PC-9 (cell line): ENCODE measurements at regions of chr5 and their contacts with region 1.

Region 1: DNA sequence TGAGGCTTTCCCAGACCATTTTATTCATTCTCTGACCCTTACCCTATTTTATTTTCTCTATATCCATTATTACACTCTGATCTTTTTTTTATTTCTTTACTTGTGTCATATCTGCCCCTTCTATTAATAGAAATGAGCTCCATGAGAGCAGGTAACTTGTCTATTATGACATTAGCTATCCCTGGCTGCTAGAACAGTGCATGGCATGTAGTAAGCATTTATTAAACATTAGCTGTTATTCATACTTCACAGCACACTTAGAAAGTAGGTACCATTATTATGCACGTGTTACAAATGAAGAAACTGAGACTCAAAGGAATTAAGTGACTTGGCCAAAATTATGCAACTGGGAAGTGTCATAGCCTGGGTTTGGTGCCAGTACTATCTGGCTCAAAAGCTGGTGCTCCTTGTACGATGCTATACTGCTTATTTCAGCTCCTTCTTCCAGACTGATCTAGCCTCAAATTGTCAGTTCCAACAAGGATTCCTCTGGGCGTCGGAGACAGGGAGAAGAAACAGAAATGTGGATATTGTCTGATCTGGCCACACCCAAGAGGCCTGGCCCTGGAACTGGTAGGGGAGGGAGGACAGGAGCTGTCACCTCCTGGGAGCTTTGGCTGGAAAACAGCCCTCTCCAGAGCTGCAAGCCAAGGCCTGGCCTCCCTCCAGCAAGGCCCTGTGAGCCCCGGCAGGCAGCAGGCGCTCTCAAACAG is 10.8 kb upstream of the NIPAL4 start:
- DNase-seq: no peak
- H3K4me3 ChIP-seq: no peak overlapping the region
- H3K27ac ChIP-seq: no peak overlapping the region
- H3K4me1 ChIP-seq: 0 out of 2 replicates have a peak, but pooled peaks cover 10% of the 10 kb centered on the region
- H3K27me3 ChIP-seq: no peaks in the 10 kb centered on the region
- CTCF ChIP-seq: no peak

Region 2: GRCh38 chr5:156755421-156756087 is 693.6 kb before region 1 on chr5:
- CTCF ChIA-PET with region 1: no interaction called
- POLR2A ChIA-PET with region 1: no interaction called
- intact Hi-C with region 1: no loop called
- DNase-seq: no peak
- H3K4me3 ChIP-seq: no peak overlapping the region
- H3K27ac ChIP-seq: no peak overlapping the region
- H3K4me1 ChIP-seq: no peaks in the 10 kb centered on the region
- H3K27me3 ChIP-seq: no peaks in the 10 kb centered on the region
- CTCF ChIP-seq: no peak

Region 3: GRCh38 chr5:157384971-157385709 is 64.0 kb before region 1 on chr5:
- CTCF ChIA-PET with region 1: no interaction called
- POLR2A ChIA-PET with region 1: interaction called, 37 read pairs
- intact Hi-C with region 1: no loop called
- DNase-seq: peak; percentile 75 to 91
- H3K4me3 ChIP-seq: no peak overlapping the region
- H3K27ac ChIP-seq: peak overlapping the region; percentile 68
- H3K4me1 ChIP-seq: peaks cover 48% of the 10 kb centered on the region
- H3K27me3 ChIP-seq: no peaks in the 10 kb centered on the region
- CTCF ChIP-seq: no peak